GM13976 (cell line): ENCODE measurements at regions of chr4 and their contacts with region 1.

Region 1: GRCh38 chr4:4256799-4257198 is 8.8 kb upstream of the TMEM128 start:
- DNase-seq: peak; percentile 11
- CTCF ChIP-seq: no peak

Region 2: GRCh38 chr4:3305598-3306371 is 951.0 kb before region 1 on chr4:
- in situ Hi-C with region 1: no loop called
- DNase-seq: no peak
- CTCF ChIP-seq: no peak

Region 3: GRCh38 chr4:4334798-4335520 is 78.2 kb after region 1 on chr4:
- in situ Hi-C with region 1: loop called (anchors 10 kb)
- DNase-seq: peak; percentile 73
- CTCF ChIP-seq: peak; percentile 79

Region 4: GRCh38 chr4:4969298-4969697 is 712.5 kb after region 1 on chr4:
- in situ Hi-C with region 1: no loop called
- DNase-seq: no peak
- CTCF ChIP-seq: no peak